ENCODE measurements at regions of chr10 and their contacts with region 1.

Region 1: DNA sequence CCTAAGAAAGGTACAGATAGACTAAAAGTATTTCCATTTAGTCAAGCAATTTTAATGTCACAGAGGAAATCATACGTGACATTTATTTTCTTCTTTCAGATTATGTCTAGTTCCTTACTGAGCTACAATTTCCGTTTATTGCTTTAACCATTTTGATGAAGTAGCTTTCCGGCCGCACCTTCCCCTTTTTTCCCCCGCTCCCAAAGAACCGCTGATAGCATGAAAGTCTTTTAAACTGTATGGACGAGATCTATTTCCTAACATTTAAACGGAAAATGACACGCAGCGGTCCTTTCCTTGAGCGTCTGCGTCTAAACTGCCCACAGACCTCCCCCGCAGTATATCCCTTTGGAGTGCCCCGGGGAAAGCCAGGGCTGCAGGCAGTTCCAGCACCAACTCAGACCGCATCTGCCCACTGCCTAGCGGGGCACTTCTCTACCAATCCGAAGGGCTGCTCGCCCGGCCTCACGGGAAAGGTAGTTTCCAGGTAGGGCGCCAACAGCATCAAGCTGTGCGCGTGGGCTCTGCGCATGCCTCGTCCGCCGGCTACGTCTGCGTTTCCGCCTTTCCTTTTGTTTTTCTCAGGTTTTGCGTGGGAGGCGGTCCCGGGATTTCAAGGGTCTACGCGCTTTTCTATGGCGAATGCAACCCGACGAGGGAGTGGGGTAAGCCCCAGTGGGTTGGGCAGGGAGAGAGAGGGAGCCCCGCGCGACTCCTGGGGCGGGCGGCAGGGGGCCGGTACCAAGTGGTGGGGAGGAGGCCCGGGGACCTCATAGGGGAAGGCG is at the start of gene ZNF33A:
- DNase-seq: peak; percentile 94
- ATAC-seq: peak; percentile 88
- H3K4me3 Mint-ChIP-seq: peak within 1 kb of the TSS; percentile 85
- H3K27ac Mint-ChIP-seq: peak within 1 kb of the TSS; percentile 98
- H3K4me1 Mint-ChIP-seq: peaks cover 31% of the 10 kb centered on the region
- H3K27me3 Mint-ChIP-seq: no peaks in the 10 kb centered on the region
- total RNA-seq, gene ZNF33A: 18.7 to 20.0 TPM

Region 2: GRCh38 chr10:37976091-37976879 is 34.0 kb before region 1 on chr10 and contains the start of gene ZNF25:
- CTCF ChIA-PET with region 1: interaction called, 11 read pairs
- POLR2A ChIA-PET with region 1: interaction called, 4 read pairs
- intact Hi-C with region 1: loop called (anchors 1 kb)
- DNase-seq: peak; percentile 99
- ATAC-seq: peak; percentile 92
- H3K4me3 Mint-ChIP-seq: peak within 1 kb of the TSS; percentile 88
- H3K27ac Mint-ChIP-seq: peak within 1 kb of the TSS; percentile 97
- H3K4me1 Mint-ChIP-seq: peaks cover 12% of the 10 kb centered on the region
- H3K27me3 Mint-ChIP-seq: no peaks in the 10 kb centered on the region
- total RNA-seq, gene ZNF25: 7.3 to 7.5 TPM

Region 3: DNA sequence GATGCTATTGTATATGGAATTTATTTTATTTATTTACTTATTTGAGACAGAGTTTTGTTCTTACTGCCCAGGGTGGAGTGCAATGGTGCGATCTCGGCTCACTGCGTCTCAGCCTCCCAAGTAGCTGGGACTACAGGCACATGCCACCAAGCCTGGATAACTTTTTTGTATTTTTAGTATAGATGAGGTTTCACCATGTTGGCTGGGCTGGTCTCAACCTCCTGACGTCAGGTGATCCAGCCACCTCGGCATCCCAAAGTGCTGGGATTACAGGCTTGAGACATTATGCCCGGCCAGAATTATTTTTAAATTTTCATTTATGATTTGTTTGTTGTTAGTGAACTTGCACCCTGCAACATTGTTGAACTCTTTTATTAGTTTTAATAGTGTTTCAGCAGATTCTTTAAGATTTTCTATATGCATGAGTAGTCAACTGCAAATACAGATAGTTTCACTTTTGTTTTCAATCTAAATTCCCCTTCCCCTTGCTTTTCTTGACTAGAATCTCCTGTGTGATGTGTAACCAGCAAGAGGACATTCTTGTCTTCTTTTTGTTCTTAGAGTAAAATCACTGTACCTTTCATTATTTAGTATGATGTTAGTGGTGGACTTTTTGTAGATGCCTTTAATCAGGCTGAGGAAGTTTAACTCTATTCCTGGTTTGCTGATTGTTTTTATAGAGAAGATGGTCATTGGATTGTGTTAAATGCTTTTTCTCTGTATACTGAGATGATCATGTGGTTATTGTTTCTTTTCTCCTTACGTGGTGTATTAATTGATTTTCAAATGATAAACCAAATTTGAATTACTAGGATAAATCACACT is 28.0 kb after region 1 on chr10:
- CTCF ChIA-PET with region 1: no interaction called
- POLR2A ChIA-PET with region 1: no interaction called
- intact Hi-C with region 1: loop called in 1 of 2 experiments (anchors 2 kb)
- DNase-seq: no peak
- ATAC-seq: peak; percentile 90
- H3K4me3 Mint-ChIP-seq: peak overlapping the region; percentile 56
- H3K27ac Mint-ChIP-seq: peak overlapping the region; percentile 86
- H3K4me1 Mint-ChIP-seq: peaks cover 29% of the 10 kb centered on the region
- H3K27me3 Mint-ChIP-seq: no peaks in the 10 kb centered on the region

Region 4: GRCh38 chr10:38094158-38094920 is 84.0 kb after region 1 on chr10 and contains the start of gene ZNF37A:
- CTCF ChIA-PET with region 1: interaction called, 4 read pairs
- POLR2A ChIA-PET with region 1: interaction called, 4 read pairs
- intact Hi-C with region 1: loop called (anchors 1 kb)
- DNase-seq: peak; percentile 94
- ATAC-seq: peak; percentile 98
- H3K4me3 Mint-ChIP-seq: peak within 1 kb of the TSS; percentile 85
- H3K27ac Mint-ChIP-seq: peak within 1 kb of the TSS; percentile 90
- H3K4me1 Mint-ChIP-seq: peaks cover 31% of the 10 kb centered on the region
- H3K27me3 Mint-ChIP-seq: no peaks in the 10 kb centered on the region
- total RNA-seq, gene ZNF37A: 24.1 to 25.5 TPM

Region 5: DNA sequence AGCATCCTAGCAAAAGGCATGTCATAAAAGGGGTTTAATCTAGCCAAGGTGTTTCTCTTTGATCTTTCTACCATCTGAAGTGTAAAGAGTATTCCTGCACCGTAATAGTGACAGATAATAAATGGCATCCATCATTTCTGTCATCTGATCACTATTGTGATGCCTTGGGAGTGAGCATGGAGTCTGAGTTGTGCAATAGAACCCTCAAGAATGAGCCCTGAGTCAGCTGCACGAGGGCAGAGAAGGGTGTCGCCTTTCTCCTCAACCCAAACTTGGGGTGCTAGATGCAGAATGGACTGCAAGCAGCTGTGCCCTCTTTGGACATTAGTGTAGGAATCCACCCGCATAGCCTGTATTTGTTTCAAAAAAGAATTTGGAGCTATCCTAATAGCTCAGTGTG is 199.0 kb after region 1 on chr10:
- CTCF ChIA-PET with region 1: no interaction called
- POLR2A ChIA-PET with region 1: no interaction called
- intact Hi-C with region 1: no loop called
- DNase-seq: no peak
- ATAC-seq: no peak
- H3K4me3 Mint-ChIP-seq: no peak overlapping the region
- H3K27ac Mint-ChIP-seq: no peak overlapping the region
- H3K4me1 Mint-ChIP-seq: no peaks in the 10 kb centered on the region
- H3K27me3 Mint-ChIP-seq: no peaks in the 10 kb centered on the region

Measured in activated CD4-positive, alpha-beta T cell treated with anti-CD3 and anti-CD28 coated beads for 36 hours (primary cell).